ENCODE measurements at regions of chr1 and their contacts with region 1.

Region 1: GRCh38 chr1:150629115-150629928 is at the start of gene ENSA:
- DNase-seq: peak; percentile 90 to 99 (median 98)
- H3K4me3 ChIP-seq: peak within 1 kb of the TSS; percentile 54 to 93 (median 81)
- H3K27ac ChIP-seq: peak within 1 kb of the TSS; percentile 79 to 100 (median 98)
- H3K27me3 ChIP-seq: no peaks in the 10 kb centered on the region
- CTCF ChIP-seq: peak in 13 of 56 donors; percentile 7 to 30 (median 15)
- total RNA-seq, gene ENSA: 155 to 380 (median 257) TPM

Region 2: GRCh38 chr1:150561974-150562445 is 67.3 kb before region 1 on chr1:
- intact Hi-C with region 1: loop called in 1 of 2 experiments (anchors 5 kb)
- DNase-seq: peak in 9 of 10 donors; percentile 38 to 84 (median 74)
- H3K4me3 ChIP-seq: peak overlapping the region; percentile 24 to 75 (median 61)
- H3K27ac ChIP-seq: peak overlapping the region; percentile 74 to 100 (median 98)
- H3K27me3 ChIP-seq: no peaks in the 10 kb centered on the region
- CTCF ChIP-seq: no peak

Region 3: GRCh38 chr1:150578965-150579798 is 50.1 kb before region 1 on chr1 and contains the start of gene MCL1:
- intact Hi-C with region 1: loop called in 1 of 2 experiments (anchors 1 kb)
- DNase-seq: peak; percentile 72 to 94 (median 92)
- H3K4me3 ChIP-seq: peak within 1 kb of the TSS; percentile 59 to 99 (median 94)
- H3K27ac ChIP-seq: peak within 1 kb of the TSS; percentile 89 to 100 (median 98)
- H3K27me3 ChIP-seq: no peaks in the 10 kb centered on the region
- CTCF ChIP-seq: peak in 38 of 56 donors; percentile 13 to 61 (median 38)
- total RNA-seq, gene MCL1: 43.4 to 130 (median 70.6) TPM

Region 4: GRCh38 chr1:150876119-150876454 is 246.8 kb after region 1 on chr1:
- intact Hi-C with region 1: loop called in 1 of 2 experiments (anchors 2 kb)
- DNase-seq: peak in 4 of 10 donors; percentile 49 to 67 (median 54)
- H3K4me3 ChIP-seq: peak overlapping the region; percentile 61 to 97 (median 87)
- H3K27ac ChIP-seq: peak overlapping the region; percentile 67 to 98 (median 95)
- H3K27me3 ChIP-seq: no peaks in the 10 kb centered on the region
- CTCF ChIP-seq: no peak

Region 5: GRCh38 chr1:150925816-150926741 is 296.8 kb after region 1 on chr1 and contains the start of gene SETDB1:
- intact Hi-C with region 1: loop called in 1 of 2 experiments (anchors 10 kb)
- DNase-seq: peak; percentile 85 to 93 (median 90)
- H3K4me3 ChIP-seq: peak within 1 kb of the TSS; percentile 47 to 94 (median 75)
- H3K27ac ChIP-seq: peak within 1 kb of the TSS in 58 of 59 donors; percentile 3 to 92 (median 80)
- H3K27me3 ChIP-seq: no peaks in the 10 kb centered on the region
- CTCF ChIP-seq: peak in 52 of 56 donors; percentile 20 to 71 (median 47)
- total RNA-seq, gene SETDB1: 29.7 to 62.6 (median 42.4) TPM

Region 6: DNA sequence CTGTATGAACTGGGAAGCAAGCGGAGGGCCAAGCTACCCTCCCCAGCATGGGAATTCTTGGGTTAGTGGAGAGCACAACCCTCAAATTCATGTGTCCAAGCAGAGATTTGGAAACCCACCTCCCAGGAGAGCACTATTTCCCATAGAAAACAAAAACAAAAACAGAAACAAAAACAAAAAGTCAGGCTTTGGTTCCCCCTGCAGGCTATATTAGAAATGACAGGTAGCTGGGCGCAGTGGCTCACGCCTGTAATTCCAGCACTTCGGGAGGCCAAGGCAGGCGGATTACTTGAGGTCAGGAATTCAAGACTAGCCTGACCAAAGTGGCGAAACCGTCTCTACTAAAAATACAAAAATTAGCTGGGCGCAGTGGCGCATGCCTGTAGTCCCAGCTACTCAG is 366.6 kb after region 1 on chr1:
- intact Hi-C with region 1: loop called in 1 of 2 experiments (anchors 5 kb)
- DNase-seq: peak in 3 of 10 donors; percentile 44 to 50 (median 46)
- H3K4me3 ChIP-seq: peak overlapping the region in 7 of 59 donors; percentile 0 to 27 (median 15)
- H3K27ac ChIP-seq: peak overlapping the region in 56 of 59 donors; percentile 10 to 95 (median 72)
- H3K27me3 ChIP-seq: no peaks in the 10 kb centered on the region
- CTCF ChIP-seq: peak; percentile 72 to 93 (median 87)

Region 7: GRCh38 chr1:151680391-151680790 is 1051.1 kb after region 1 on chr1:
- intact Hi-C with region 1: no loop called
- DNase-seq: no peak
- H3K4me3 ChIP-seq: no peak overlapping the region
- H3K27ac ChIP-seq: no peak overlapping the region
- H3K27me3 ChIP-seq: no peaks in the 10 kb centered on the region
- CTCF ChIP-seq: no peak

Measured in dorsolateral prefrontal cortex (tissue), 120 donors.